Activated B cell treated with CpG ODN at 0.5 μM for 24 hours (primary cell): ENCODE measurements at regions of chr19 and their contacts with region 1.

Region 1: GRCh38 chr19:17135001-17135853 is 59.6 kb downstream of the MYO9B start:
- DNase-seq: peak; percentile 58
- ATAC-seq: peak; percentile 86
- H3K4me3 Mint-ChIP-seq: peak overlapping the region; percentile 77
- H3K27ac Mint-ChIP-seq: peak overlapping the region; percentile 86
- H3K4me1 Mint-ChIP-seq: peaks cover 67% of the 10 kb centered on the region
- H3K27me3 Mint-ChIP-seq: no peaks in the 10 kb centered on the region
- CTCF ChIP-seq: no peak

Region 2: GRCh38 chr19:16847430-16847829 is 287.8 kb before region 1 on chr19:
- CTCF ChIA-PET with region 1: no interaction called
- POLR2A ChIA-PET with region 1: no interaction called
- intact Hi-C with region 1: no loop called
- DNase-seq: no peak
- ATAC-seq: no peak
- H3K4me3 Mint-ChIP-seq: no peak overlapping the region
- H3K27ac Mint-ChIP-seq: no peak overlapping the region
- H3K4me1 Mint-ChIP-seq: peaks cover 9% of the 10 kb centered on the region
- H3K27me3 Mint-ChIP-seq: no peaks in the 10 kb centered on the region
- CTCF ChIP-seq: no peak

Region 3: GRCh38 chr19:17107525-17108452 is 27.4 kb before region 1 on chr19:
- CTCF ChIA-PET with region 1: interaction called, 3 read pairs
- POLR2A ChIA-PET with region 1: interaction called, 4 read pairs
- intact Hi-C with region 1: loop called (anchors 1 kb)
- DNase-seq: no peak
- ATAC-seq: peak; percentile 23
- H3K4me3 Mint-ChIP-seq: peak overlapping the region; percentile 53
- H3K27ac Mint-ChIP-seq: peak overlapping the region; percentile 86
- H3K4me1 Mint-ChIP-seq: peaks cover 93% of the 10 kb centered on the region
- H3K27me3 Mint-ChIP-seq: no peaks in the 10 kb centered on the region
- CTCF ChIP-seq: no peak

Region 4: DNA sequence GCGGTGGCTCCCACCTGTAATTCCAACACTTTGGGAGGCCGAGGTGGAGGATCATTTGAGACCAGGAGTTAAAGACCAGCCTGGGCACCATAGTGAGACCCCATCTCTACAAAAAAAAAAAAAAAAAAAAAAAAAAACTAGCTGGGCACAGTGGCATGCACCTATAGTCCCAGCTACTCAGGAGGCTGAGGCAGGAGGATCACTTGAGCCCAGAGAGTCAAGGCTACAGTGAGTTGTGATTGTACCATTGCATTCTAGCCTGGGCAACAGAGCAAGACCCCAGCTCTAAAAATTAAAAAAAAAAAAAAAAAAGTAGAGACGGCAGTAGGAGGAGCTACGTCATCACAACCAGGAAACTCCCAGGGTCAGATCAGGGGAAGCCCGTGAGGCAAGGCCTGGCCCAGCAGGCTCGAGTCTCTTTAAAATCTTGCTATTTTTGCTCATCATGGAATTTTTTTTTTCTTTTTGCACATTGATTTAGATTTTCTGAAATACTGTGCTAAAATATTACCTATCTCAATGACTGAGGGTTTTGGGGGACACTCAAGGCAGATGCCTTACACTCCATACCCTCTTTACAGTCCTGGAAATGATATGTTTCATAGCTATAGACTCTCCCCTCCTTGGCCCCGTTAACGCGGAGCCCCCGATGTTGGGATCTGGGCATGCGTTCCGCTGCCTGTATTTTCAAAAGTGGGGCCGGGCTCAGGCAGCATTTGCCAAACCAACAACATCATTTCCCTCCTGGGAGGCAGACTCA is 35.5 kb after region 1 on chr19:
- CTCF ChIA-PET with region 1: no interaction called
- POLR2A ChIA-PET with region 1: no interaction called
- intact Hi-C with region 1: loop called (anchors 2 kb)
- DNase-seq: no peak
- ATAC-seq: peak; percentile 89
- H3K4me3 Mint-ChIP-seq: peak overlapping the region; percentile 56
- H3K27ac Mint-ChIP-seq: peak overlapping the region; percentile 89
- H3K4me1 Mint-ChIP-seq: peaks cover 16% of the 10 kb centered on the region
- H3K27me3 Mint-ChIP-seq: no peaks in the 10 kb centered on the region
- CTCF ChIP-seq: no peak

Region 5: GRCh38 chr19:17183858-17184321 is 48.7 kb after region 1 on chr19:
- CTCF ChIA-PET with region 1: no interaction called
- POLR2A ChIA-PET with region 1: interaction called, 4 read pairs
- intact Hi-C with region 1: loop called (anchors 5 kb)
- DNase-seq: peak; percentile 42
- ATAC-seq: peak; percentile 85
- H3K4me3 Mint-ChIP-seq: peak overlapping the region; percentile 79
- H3K27ac Mint-ChIP-seq: peak overlapping the region; percentile 99
- H3K4me1 Mint-ChIP-seq: peaks cover 32% of the 10 kb centered on the region
- H3K27me3 Mint-ChIP-seq: no peaks in the 10 kb centered on the region
- CTCF ChIP-seq: no peak

Region 6: GRCh38 chr19:17201913-17202648 is 66.9 kb after region 1 on chr19:
- CTCF ChIA-PET with region 1: no interaction called
- POLR2A ChIA-PET with region 1: no interaction called
- intact Hi-C with region 1: no loop called
- DNase-seq: no peak
- ATAC-seq: peak; percentile 38
- H3K4me3 Mint-ChIP-seq: no peak overlapping the region
- H3K27ac Mint-ChIP-seq: no peak overlapping the region
- H3K4me1 Mint-ChIP-seq: no peaks in the 10 kb centered on the region
- H3K27me3 Mint-ChIP-seq: no peaks in the 10 kb centered on the region
- CTCF ChIP-seq: no peak

Region 7: GRCh38 chr19:17245244-17245984 is 110.2 kb after region 1 on chr19 and contains the start of gene NR2F6:
- CTCF ChIA-PET with region 1: no interaction called
- POLR2A ChIA-PET with region 1: interaction called, 12 read pairs
- intact Hi-C with region 1: no loop called
- DNase-seq: no peak
- ATAC-seq: peak; percentile 39
- H3K4me3 Mint-ChIP-seq: peak within 1 kb of the TSS; percentile 92
- H3K27ac Mint-ChIP-seq: peak within 1 kb of the TSS; percentile 89
- H3K4me1 Mint-ChIP-seq: peaks cover 13% of the 10 kb centered on the region
- H3K27me3 Mint-ChIP-seq: no peaks in the 10 kb centered on the region
- CTCF ChIP-seq: no peak
- total RNA-seq, gene NR2F6: 4.3 and 4.6 TPM in 2 replicates